ENCODE measurements at regions of chr15 and their contacts with region 1.

Region 1: DNA sequence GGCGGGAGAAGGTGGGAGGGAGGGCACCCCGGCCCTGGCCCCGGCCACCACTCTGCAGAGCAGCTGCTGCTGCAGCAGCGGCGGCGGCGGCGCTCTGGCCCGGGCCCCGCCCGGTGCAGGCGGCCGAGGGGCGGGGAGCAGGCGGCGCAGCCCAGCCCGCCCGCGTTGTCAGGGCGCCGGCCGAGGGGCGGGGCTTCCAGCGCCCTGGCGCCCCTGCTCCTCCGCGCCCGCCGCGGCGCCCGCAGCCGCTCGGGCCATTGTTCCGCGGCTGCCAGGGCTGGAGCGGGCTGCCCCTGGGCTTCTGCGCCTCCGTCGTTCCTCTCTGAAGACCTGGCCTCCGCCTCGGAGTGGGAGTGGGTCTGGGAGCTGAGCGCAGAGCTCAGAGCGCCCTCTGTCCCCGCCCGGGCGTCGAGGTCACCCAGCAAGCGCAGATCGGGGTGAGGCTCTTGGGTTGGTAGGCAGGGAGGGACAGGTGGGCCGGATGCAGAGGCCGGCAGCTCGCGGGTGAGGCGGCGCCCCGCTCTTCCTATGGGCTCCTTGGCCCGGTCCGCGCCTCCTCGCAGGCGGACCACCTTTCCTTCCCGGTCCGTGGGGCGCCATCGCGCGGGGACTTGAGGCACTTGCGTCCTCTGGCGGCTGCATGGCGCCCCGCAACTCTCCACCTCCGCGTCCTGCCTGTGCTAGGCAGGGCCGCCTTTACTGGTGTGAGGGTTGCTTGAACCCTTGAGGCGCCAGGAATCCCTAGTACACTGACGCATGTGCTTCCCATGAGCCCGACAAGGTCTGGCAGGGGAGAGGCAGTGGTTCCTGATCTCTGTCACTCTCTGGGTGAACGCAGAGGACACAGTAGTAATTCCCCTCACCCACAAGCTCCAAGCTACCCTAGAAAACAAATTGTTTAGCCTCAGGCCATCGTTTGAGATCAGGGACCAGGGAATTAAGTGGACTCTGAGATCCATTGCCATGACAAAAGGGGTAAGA is at the start of gene LPCAT4:
- DNase-seq: peak; percentile 88
- H3K4me3 Mint-ChIP-seq: peak within 1 kb of the TSS; percentile 98
- H3K27ac Mint-ChIP-seq: peak within 1 kb of the TSS; percentile 97
- H3K4me1 Mint-ChIP-seq: peaks cover 39% of the 10 kb centered on the region
- H3K27me3 Mint-ChIP-seq: no peaks in the 10 kb centered on the region
- total RNA-seq, gene LPCAT4: 78.0 and 80.8 TPM in 2 replicates

Region 2: GRCh38 chr15:33693166-33693800 is 674.1 kb before region 1 on chr15:
- intact Hi-C with region 1: no loop called
- DNase-seq: no peak
- H3K4me3 Mint-ChIP-seq: no peak overlapping the region
- H3K27ac Mint-ChIP-seq: no peak overlapping the region
- H3K4me1 Mint-ChIP-seq: no peaks in the 10 kb centered on the region
- H3K27me3 Mint-ChIP-seq: peaks cover 2% of the 10 kb centered on the region

Region 3: GRCh38 chr15:34109797-34110663 is 257.4 kb before region 1 on chr15:
- intact Hi-C with region 1: loop called (anchors 2 kb)
- DNase-seq: no peak
- H3K4me3 Mint-ChIP-seq: no peak overlapping the region
- H3K27ac Mint-ChIP-seq: no peak overlapping the region
- H3K4me1 Mint-ChIP-seq: peaks cover 6% of the 10 kb centered on the region
- H3K27me3 Mint-ChIP-seq: peaks cover 3% of the 10 kb centered on the region

Region 4: GRCh38 chr15:34223904-34224596 is 143.3 kb before region 1 on chr15:
- intact Hi-C with region 1: loop called (anchors 1 kb)
- DNase-seq: no peak
- H3K4me3 Mint-ChIP-seq: peak overlapping the region; percentile 90
- H3K27ac Mint-ChIP-seq: peak overlapping the region; percentile 98
- H3K4me1 Mint-ChIP-seq: peaks cover 35% of the 10 kb centered on the region
- H3K27me3 Mint-ChIP-seq: no peaks in the 10 kb centered on the region

Region 5: GRCh38 chr15:34337557-34338306 is 29.7 kb before region 1 on chr15 and contains the start of gene SLC12A6:
- intact Hi-C with region 1: loop called (anchors 1 kb)
- DNase-seq: peak; percentile 90
- H3K4me3 Mint-ChIP-seq: peak within 1 kb of the TSS; percentile 97
- H3K27ac Mint-ChIP-seq: peak within 1 kb of the TSS; percentile 97
- H3K4me1 Mint-ChIP-seq: peaks cover 66% of the 10 kb centered on the region
- H3K27me3 Mint-ChIP-seq: no peaks in the 10 kb centered on the region
- total RNA-seq, gene SLC12A6: 33.2 and 36.4 TPM in 2 replicates

Region 6: DNA sequence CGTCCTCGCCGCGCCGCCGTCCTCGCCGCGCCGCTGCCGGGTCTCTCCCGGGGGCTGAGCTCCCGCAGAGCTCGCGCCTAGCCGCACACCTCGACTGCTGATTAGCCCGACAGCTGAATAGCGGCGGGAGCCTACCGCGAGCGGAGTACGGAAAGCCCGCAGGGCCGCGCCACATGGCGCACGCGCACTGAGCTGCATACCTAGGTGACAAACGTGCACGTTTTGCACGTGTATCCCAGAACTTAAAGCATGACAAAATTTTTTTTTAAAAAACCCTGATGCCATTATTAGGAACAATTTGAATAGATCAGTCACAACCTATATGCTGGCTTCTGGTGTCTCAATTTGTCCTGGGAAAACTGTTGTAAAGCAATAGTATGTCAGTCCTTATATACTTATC is 70.3 kb after region 1 on chr15 and contains the start of gene GOLGA8A:
- intact Hi-C with region 1: loop called (anchors 1 kb)
- DNase-seq: peak; percentile 80
- H3K4me3 Mint-ChIP-seq: peak within 1 kb of the TSS; percentile 91
- H3K27ac Mint-ChIP-seq: peak within 1 kb of the TSS; percentile 98
- H3K4me1 Mint-ChIP-seq: peaks cover 29% of the 10 kb centered on the region
- H3K27me3 Mint-ChIP-seq: peaks cover 14% of the 10 kb centered on the region
- total RNA-seq, gene GOLGA8A: 264 and 275 TPM in 2 replicates